Stomach (tissue), 19 donors: ENCODE measurements at regions of chr2 and their contacts with region 1.

Region 1: GRCh38 chr2:174522553-174522952 is 35.7 kb upstream of the GPR155 start:
- DNase-seq: peak in 1 of 2 donors; percentile 25
- H3K4me3 ChIP-seq: no peak overlapping the region
- H3K27ac ChIP-seq: no peak overlapping the region
- H3K4me1 ChIP-seq: peaks cover 0 to 3% (median 0%) of the 10 kb centered on the region in 4 donors
- H3K27me3 ChIP-seq: no peaks in the 10 kb centered on the region
- CTCF ChIP-seq: peak in 4 of 7 experiments; percentile 7 to 45 (median 22)
- EP300 ChIP-seq: no peak
- POLR2A ChIP-seq: no peak

Region 2: DNA sequence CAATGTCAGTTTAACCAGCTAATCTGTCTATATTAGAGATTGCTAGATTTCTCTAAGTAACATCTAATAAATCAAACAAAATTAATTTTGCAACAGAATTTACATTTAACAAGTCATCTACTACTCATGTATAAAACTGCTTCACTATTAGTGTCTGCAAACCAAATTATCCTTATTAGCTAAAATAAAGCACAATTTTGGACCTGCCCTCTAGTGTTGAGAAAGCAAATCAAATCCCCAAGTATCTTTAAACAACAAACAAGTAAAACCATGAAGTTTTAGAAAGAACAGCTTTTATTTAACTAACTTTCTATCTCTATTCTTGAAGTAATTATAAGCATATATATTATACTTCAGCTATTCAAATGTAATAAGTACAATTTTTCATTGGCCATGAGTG is 444.3 kb before region 1 on chr2:
- intact Hi-C with region 1: no loop called
- DNase-seq: peak in 1 of 2 donors; percentile 23
- H3K4me3 ChIP-seq: no peak overlapping the region
- H3K27ac ChIP-seq: no peak overlapping the region
- H3K4me1 ChIP-seq: no peaks in the 10 kb centered on the region
- H3K27me3 ChIP-seq: no peaks in the 10 kb centered on the region
- CTCF ChIP-seq: peak in 2 of 7 experiments; percentile 34 to 41
- EP300 ChIP-seq: no peak
- POLR2A ChIP-seq: no peak

Region 3: GRCh38 chr2:174461221-174461620 is 61.3 kb before region 1 on chr2:
- intact Hi-C with region 1: loop called (anchors 5 kb)
- DNase-seq: no peak
- H3K4me3 ChIP-seq: no peak overlapping the region
- H3K27ac ChIP-seq: no peak overlapping the region
- H3K4me1 ChIP-seq: no peaks in the 10 kb centered on the region
- H3K27me3 ChIP-seq: no peaks in the 10 kb centered on the region
- CTCF ChIP-seq: no peak
- EP300 ChIP-seq: no peak
- POLR2A ChIP-seq: no peak

Region 4: DNA sequence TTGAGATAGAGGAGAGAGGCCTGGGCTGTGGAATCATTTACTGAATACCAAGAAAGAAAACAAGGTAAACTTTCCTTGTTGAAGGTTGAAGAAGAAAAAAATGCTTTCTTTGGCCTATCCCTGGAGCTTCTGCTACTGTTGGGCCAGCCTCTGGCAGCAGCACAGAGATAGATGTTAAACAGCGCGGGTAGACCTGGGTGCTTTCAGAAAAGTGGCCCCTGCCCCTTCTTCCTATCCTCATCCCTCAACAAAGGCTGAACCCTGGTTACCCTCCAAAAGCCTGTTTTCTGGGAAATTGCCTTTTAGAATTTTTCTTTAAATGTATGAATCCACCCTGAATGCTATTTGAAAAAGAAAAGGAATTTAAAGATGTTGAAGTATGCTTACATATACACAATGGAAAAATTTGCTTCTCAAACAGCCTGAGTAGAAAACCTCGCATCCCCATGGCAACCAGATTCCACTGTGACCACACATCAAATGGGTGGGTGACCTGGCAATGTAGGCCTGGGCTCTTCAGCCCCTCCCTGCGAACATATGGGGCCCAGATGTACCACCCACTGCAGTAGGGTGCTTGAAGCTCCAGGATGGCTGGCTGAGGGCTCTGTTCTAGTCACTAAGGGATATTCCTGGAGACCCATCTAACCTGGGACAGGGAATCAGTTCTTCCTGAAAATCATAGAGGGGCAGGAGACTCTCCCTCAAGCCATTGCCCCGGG is 265.1 kb after region 1 on chr2:
- intact Hi-C with region 1: no loop called
- DNase-seq: peak in 1 of 2 donors; percentile 89
- H3K4me3 ChIP-seq: no peak overlapping the region
- H3K27ac ChIP-seq: no peak overlapping the region
- H3K4me1 ChIP-seq: no peaks in the 10 kb centered on the region
- H3K27me3 ChIP-seq: no peaks in the 10 kb centered on the region
- CTCF ChIP-seq: no peak
- EP300 ChIP-seq: no peak
- POLR2A ChIP-seq: no peak

Region 5: DNA sequence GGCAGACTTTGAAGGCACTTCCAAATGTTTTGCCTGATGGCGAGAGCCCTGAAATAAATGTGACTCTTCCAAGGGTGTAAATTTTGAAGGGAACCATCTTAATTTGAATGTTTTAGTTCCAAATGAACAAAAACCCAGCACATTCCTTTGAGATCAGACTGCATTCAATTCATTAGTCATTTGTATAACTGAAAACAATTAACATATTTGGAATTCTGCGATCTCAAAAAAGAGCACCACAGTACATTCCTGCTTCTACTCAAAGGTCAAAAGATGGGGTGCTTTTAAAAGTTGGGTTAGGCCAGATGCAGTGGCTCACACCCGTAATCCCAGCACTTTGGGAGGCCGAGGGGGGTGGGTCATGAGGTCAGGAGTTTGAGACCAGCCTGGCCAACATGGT is 279.9 kb after region 1 on chr2:
- intact Hi-C with region 1: no loop called
- DNase-seq: no peak
- H3K4me3 ChIP-seq: no peak overlapping the region
- H3K27ac ChIP-seq: no peak overlapping the region
- H3K4me1 ChIP-seq: no peaks in the 10 kb centered on the region
- H3K27me3 ChIP-seq: no peaks in the 10 kb centered on the region
- CTCF ChIP-seq: no peak
- EP300 ChIP-seq: no peak
- POLR2A ChIP-seq: no peak